H1 (cell line): ENCODE measurements at regions of chr7 and their contacts with region 1.

Region 1: DNA sequence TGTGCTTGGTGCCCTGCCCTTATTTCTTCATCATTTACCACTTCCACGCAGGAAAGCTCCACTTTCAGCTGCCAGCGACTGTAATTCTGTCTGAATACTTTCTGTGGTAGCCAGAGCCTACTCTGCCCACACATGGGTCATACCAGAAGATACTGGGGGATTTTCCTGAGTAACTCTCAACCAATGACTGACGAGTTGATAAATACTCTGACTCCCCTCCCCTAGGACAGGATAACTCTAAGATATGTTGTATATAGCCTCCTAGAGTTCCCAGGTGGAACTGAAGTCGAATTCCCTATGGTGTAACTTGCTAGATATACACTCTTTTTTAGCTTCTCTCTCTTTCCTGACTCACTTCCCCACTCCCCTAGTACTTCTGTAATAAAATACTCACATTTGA is 29.8 kb downstream of the SEM1 start:
- DNase-seq: no peak
- H3K4me3 ChIP-seq: no peak overlapping the region
- H3K27ac ChIP-seq: no peak overlapping the region
- H3K4me1 ChIP-seq: no peaks in the 10 kb centered on the region
- H3K27me3 ChIP-seq: no peaks in the 10 kb centered on the region
- CTCF ChIP-seq: peak in 1 of 3 experiments; percentile 46; a peak in 2 of 4 replicates
- EP300 ChIP-seq: no peak
- POLR2A ChIP-seq: no peak
- RAD21 ChIP-seq: peak; percentile 49 to 51

Region 2: GRCh38 chr7:96596120-96596826 is 83.6 kb before region 1 on chr7:
- CTCF ChIA-PET with region 1: interaction called, 11 read pairs
- POLR2A ChIA-PET with region 1: no interaction called
- DNase-seq: no peak
- H3K4me3 ChIP-seq: no peak overlapping the region
- H3K27ac ChIP-seq: no peak overlapping the region
- H3K4me1 ChIP-seq: peaks cover 0 to 18% (median 16%) of the 10 kb centered on the region in 4 experiments; a peak in 4 of 7 replicates
- H3K27me3 ChIP-seq: no peaks in the 10 kb centered on the region
- CTCF ChIP-seq: no peak
- EP300 ChIP-seq: no peak
- POLR2A ChIP-seq: no peak
- RAD21 ChIP-seq: peak in 1 of 2 experiments; percentile 30; a peak in 2 of 4 replicates

Region 3: DNA sequence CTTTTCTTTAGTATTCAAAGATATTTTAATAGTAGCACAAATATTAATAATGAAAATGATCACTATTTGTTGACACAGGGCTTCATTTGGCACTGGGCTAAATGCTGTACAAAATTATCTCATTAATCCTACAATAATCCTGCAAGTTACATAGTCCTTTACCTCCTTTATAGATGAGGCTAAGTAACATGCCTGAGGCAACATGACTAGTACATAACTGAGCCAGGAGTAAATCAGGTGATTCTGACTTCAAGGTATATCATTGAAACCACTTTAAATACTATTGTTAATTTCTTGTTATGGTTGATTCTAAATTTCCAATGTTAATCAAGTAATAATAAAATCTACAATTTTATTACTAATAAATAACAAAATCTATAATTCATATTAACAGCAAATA is 10.1 kb before region 1 on chr7:
- CTCF ChIA-PET with region 1: interaction called, 11 read pairs
- POLR2A ChIA-PET with region 1: interaction called, 4 read pairs
- DNase-seq: no peak
- H3K4me3 ChIP-seq: no peak overlapping the region
- H3K27ac ChIP-seq: no peak overlapping the region
- H3K4me1 ChIP-seq: no peaks in the 10 kb centered on the region
- H3K27me3 ChIP-seq: no peaks in the 10 kb centered on the region
- CTCF ChIP-seq: no peak
- EP300 ChIP-seq: no peak
- POLR2A ChIP-seq: no peak
- RAD21 ChIP-seq: no peak